Activated CD4-positive, alpha-beta T cell treated with anti-CD3 and anti-CD28 coated beads for 36 hours (primary cell): ENCODE measurements at regions of chr19 and their contacts with region 1.

Region 1: GRCh38 chr19:35545001-35545911 is at the start of gene TMEM147:
- DNase-seq: peak; percentile 93
- ATAC-seq: peak; percentile 77
- H3K4me3 Mint-ChIP-seq: peak within 1 kb of the TSS; percentile 92
- H3K27ac Mint-ChIP-seq: peak within 1 kb of the TSS; percentile 91
- H3K4me1 Mint-ChIP-seq: peaks cover 35% of the 10 kb centered on the region
- H3K27me3 Mint-ChIP-seq: no peaks in the 10 kb centered on the region
- total RNA-seq, gene TMEM147: 73.1 to 73.8 TPM

Region 2: GRCh38 chr19:35030257-35031071 is 514.8 kb before region 1 on chr19 and contains the start of gene SCN1B:
- CTCF ChIA-PET with region 1: no interaction called
- POLR2A ChIA-PET with region 1: no interaction called
- intact Hi-C with region 1: no loop called
- DNase-seq: peak; percentile 89
- ATAC-seq: peak; percentile 89
- H3K4me3 Mint-ChIP-seq: peak within 1 kb of the TSS; percentile 68
- H3K27ac Mint-ChIP-seq: no peak within 1 kb of the TSS
- H3K4me1 Mint-ChIP-seq: peaks cover 6% of the 10 kb centered on the region
- H3K27me3 Mint-ChIP-seq: peaks cover 22% of the 10 kb centered on the region
- total RNA-seq, gene SCN1B: 1.3 to 1.6 TPM

Region 3: GRCh38 chr19:35269421-35270117 is 275.7 kb before region 1 on chr19:
- CTCF ChIA-PET with region 1: no interaction called
- POLR2A ChIA-PET with region 1: no interaction called
- intact Hi-C with region 1: loop called in 1 of 2 experiments (anchors 2 kb)
- DNase-seq: peak; percentile 88
- ATAC-seq: peak; percentile 68
- H3K4me3 Mint-ChIP-seq: peak overlapping the region; percentile 63
- H3K27ac Mint-ChIP-seq: peak overlapping the region; percentile 63
- H3K4me1 Mint-ChIP-seq: peaks cover 20% of the 10 kb centered on the region
- H3K27me3 Mint-ChIP-seq: no peaks in the 10 kb centered on the region

Region 4: GRCh38 chr19:35498984-35499527 is 46.2 kb before region 1 on chr19:
- CTCF ChIA-PET with region 1: no interaction called
- POLR2A ChIA-PET with region 1: no interaction called
- intact Hi-C with region 1: no loop called
- DNase-seq: no peak
- ATAC-seq: no peak
- H3K4me3 Mint-ChIP-seq: no peak overlapping the region
- H3K27ac Mint-ChIP-seq: no peak overlapping the region
- H3K4me1 Mint-ChIP-seq: peaks cover 5% of the 10 kb centered on the region
- H3K27me3 Mint-ChIP-seq: peaks cover 3% of the 10 kb centered on the region

Region 5: GRCh38 chr19:35557539-35558399 is 12.5 kb after region 1 on chr19:
- CTCF ChIA-PET with region 1: interaction called, 18 read pairs
- POLR2A ChIA-PET with region 1: no interaction called
- intact Hi-C with region 1: no loop called
- DNase-seq: peak; percentile 75
- ATAC-seq: peak; percentile 78
- H3K4me3 Mint-ChIP-seq: peak overlapping the region; percentile 63
- H3K27ac Mint-ChIP-seq: no peak overlapping the region
- H3K4me1 Mint-ChIP-seq: peaks cover 8% of the 10 kb centered on the region
- H3K27me3 Mint-ChIP-seq: peaks cover 38% of the 10 kb centered on the region

Region 6: DNA sequence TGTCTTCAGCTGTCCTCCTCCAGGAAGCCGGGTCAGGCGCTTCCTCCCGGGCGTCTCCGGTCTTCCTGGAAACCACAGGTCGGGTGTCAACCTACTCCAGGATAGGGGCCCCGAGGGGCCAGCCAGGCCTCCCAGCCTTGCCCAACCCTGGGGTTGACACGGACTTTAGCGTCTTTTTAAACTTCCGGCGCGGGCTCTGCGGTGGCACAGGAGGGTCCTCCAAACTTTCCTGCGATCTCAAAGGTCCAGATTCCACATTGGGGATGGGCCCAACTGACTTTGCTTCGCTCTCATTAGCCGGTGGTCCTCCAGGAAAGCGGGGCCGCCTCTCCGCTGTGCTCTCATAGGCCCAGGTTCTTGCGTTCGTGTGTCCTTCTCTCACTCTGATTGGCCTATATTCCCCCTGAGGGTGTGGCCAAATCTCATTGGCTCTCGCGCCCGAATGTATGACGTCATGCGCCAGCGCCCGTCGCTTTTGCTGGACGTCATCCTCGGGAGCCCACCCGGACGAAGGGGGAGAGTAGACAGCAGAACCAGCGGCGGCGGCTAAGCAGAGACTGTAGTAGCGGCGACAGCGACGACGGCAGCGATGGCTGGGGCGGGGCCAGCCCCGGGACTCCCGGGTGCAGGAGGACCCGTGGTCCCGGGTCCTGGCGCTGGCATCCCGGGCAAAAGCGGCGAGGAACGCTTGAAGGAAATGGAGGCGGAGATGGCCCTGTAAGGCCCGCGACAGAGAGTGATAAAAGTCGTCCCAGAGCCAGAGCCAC is 83.5 kb after region 1 on chr19 and contains the start of gene RBM42:
- CTCF ChIA-PET with region 1: interaction called, 3 read pairs
- POLR2A ChIA-PET with region 1: no interaction called
- intact Hi-C with region 1: loop called (anchors 1 to 5 kb)
- DNase-seq: peak; percentile 97
- ATAC-seq: peak; percentile 100
- H3K4me3 Mint-ChIP-seq: peak within 1 kb of the TSS; percentile 98
- H3K27ac Mint-ChIP-seq: peak within 1 kb of the TSS; percentile 98
- H3K4me1 Mint-ChIP-seq: peaks cover 12% of the 10 kb centered on the region
- H3K27me3 Mint-ChIP-seq: no peaks in the 10 kb centered on the region
- total RNA-seq, gene RBM42: 87.5 to 94.4 TPM

Region 7: GRCh38 chr19:35710784-35711723 is 165.8 kb after region 1 on chr19:
- CTCF ChIA-PET with region 1: no interaction called
- POLR2A ChIA-PET with region 1: no interaction called
- intact Hi-C with region 1: loop called (anchors 1 to 5 kb)
- DNase-seq: peak; percentile 88
- ATAC-seq: peak; percentile 48
- H3K4me3 Mint-ChIP-seq: peak overlapping the region; percentile 56
- H3K27ac Mint-ChIP-seq: peak overlapping the region; percentile 100
- H3K4me1 Mint-ChIP-seq: peaks cover 43% of the 10 kb centered on the region
- H3K27me3 Mint-ChIP-seq: no peaks in the 10 kb centered on the region

Region 8: DNA sequence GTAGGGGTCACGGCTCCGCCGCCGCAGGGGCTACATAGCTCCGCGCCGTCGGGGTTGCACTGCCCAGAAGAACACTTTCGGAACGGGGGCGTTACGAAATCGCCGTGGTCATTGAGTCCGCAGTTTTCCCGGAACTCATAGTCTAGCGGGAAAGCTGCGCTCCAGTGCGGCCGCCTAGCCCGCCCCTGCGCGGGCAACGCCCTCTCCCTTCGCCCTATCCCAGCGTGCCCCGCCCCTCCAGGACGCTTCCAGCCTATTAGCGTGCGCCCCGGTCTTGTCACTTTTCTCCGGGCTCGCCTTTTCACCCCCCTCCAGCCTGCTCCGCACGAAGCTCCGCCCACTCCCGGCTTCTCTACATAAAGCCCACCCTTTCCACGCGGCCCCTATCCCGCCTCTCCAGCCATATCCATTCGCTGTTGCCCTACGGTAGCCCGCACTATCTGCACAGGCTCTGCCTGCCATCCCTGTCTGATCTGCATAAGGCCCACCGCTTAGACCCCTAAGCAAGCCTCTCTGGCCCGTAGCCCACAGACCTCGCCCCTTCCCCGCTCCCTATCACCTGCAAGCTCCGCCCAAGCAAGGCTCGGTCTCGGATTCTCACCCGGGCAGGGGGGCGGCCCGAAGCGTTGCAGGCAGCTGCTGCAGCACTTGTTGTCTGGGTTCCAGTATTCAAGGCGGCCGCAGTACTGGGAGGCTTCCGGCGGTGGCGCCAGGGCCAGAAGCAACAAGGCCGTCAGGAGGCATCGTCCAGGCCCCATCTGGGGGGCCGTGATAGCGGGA is 195.4 kb after region 1 on chr19:
- CTCF ChIA-PET with region 1: no interaction called
- POLR2A ChIA-PET with region 1: no interaction called
- intact Hi-C with region 1: no loop called
- DNase-seq: peak; percentile 99
- ATAC-seq: peak; percentile 67
- H3K4me3 Mint-ChIP-seq: peak overlapping the region; percentile 82
- H3K27ac Mint-ChIP-seq: peak overlapping the region; percentile 96
- H3K4me1 Mint-ChIP-seq: peaks cover 28% of the 10 kb centered on the region
- H3K27me3 Mint-ChIP-seq: no peaks in the 10 kb centered on the region